ENCODE measurements at regions of chr5 and their contacts with region 1.

Region 1: GRCh38 chr5:139633295-139634027 is 14.7 kb upstream of the CXXC5 start:
- DNase-seq: peak; percentile 63
- ATAC-seq: peak; percentile 15
- H3K4me3 Mint-ChIP-seq: no peak overlapping the region
- H3K27ac Mint-ChIP-seq: peak overlapping the region; percentile 97
- H3K4me1 Mint-ChIP-seq: peaks cover 53% of the 10 kb centered on the region
- H3K27me3 Mint-ChIP-seq: no peaks in the 10 kb centered on the region
- CTCF ChIP-seq: peak; percentile 56

Region 2: DNA sequence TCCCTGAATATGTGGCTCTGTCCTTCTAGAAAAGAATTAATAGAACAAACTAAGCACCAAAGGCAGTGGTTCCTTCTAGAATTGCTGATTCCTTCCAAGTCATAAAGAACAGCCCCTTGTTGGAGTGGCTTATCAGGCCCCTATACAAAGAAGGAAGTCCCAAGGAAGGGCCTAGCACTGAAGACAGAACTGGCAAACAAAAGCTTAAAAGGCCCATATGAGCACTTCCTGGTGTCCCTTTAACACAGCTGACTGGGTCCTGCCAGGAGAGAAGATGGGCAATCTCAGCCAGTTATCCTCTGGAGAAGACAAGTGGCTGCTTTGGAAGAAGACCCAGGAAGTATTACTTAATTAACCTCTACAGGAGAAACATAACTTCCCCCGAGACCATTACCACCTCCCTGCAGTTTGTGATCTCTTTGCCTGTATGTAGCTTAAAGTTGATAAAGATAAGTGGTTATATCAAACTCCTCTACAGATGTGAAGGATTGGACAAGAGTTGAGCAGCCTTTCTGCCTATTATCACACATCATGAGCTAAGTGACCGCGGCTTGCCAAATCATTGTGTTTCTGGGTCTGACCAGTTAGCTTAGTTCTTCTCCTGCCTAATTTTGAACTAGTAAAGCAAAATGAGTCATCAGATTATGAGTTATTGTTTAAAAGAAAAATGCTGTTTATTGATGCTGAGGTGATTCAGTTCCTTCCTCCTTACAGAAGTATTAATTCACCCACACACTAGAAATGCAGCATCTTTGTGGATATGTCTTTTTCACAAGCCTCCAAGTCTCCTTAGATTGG is 137.6 kb before region 1 on chr5:
- CTCF ChIA-PET with region 1: no interaction called
- POLR2A ChIA-PET with region 1: no interaction called
- intact Hi-C with region 1: no loop called
- DNase-seq: no peak
- ATAC-seq: no peak
- H3K4me3 Mint-ChIP-seq: no peak overlapping the region
- H3K27ac Mint-ChIP-seq: no peak overlapping the region
- H3K4me1 Mint-ChIP-seq: no peaks in the 10 kb centered on the region
- H3K27me3 Mint-ChIP-seq: peaks cover 2% of the 10 kb centered on the region
- CTCF ChIP-seq: no peak

Region 3: GRCh38 chr5:139517683-139518564 is 115.5 kb before region 1 on chr5:
- CTCF ChIA-PET with region 1: interaction called, 7 read pairs
- POLR2A ChIA-PET with region 1: interaction called, 3 read pairs
- intact Hi-C with region 1: loop called (anchors 5 kb)
- DNase-seq: peak; percentile 93
- ATAC-seq: peak; percentile 93
- H3K4me3 Mint-ChIP-seq: peak overlapping the region; percentile 84
- H3K27ac Mint-ChIP-seq: peak overlapping the region; percentile 89
- H3K4me1 Mint-ChIP-seq: peaks cover 19% of the 10 kb centered on the region
- H3K27me3 Mint-ChIP-seq: no peaks in the 10 kb centered on the region
- CTCF ChIP-seq: peak; percentile 57

Region 4: DNA sequence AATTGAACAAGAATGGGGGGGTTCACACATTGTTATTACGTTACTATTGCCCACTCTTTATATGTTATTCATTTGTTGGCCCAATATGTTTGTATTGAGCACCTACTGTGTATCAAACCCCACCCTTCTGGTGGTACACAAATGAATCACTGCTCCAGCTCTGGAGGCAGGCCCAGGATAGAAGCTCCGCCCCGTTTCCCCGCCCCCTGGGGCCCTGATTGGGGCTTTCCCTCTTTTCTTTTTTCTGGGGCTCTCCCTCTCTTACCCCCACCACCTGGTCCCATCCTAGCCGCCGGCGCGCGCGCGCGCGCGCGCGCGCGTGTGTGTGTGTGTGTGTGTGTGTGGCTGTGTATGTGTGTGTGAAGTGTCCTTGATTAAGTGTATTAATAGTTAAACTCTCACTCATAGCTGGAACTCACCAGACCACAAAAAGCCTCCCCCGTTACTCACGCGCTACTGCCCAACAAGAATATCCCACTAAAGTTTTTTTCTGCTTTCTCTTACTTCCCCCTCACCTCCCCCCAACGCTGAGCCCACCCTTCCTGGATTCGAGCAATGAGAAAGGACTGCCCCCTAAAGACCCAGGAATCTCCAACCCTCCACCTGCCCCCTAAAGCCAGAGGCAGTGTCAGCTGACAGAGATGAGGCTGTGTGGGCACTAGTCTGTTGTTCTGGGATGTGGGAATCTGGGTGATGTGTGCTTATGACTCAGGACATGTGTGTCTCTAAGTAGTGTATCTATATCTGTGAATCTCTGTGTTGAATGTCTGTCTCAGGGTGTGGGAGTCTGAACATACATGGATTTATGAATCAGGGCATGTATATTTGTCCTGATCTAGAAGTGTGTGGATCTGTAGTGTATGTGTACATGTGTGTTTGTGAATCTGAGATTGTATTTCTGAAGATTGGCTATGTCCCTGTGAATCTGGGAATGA is 18.7 kb after region 1 on chr5:
- CTCF ChIA-PET with region 1: interaction called, 169 read pairs
- POLR2A ChIA-PET with region 1: interaction called, 772 read pairs
- intact Hi-C with region 1: loop called (anchors 1 kb)
- DNase-seq: peak; percentile 91
- ATAC-seq: peak; percentile 56
- H3K4me3 Mint-ChIP-seq: peak overlapping the region; percentile 98
- H3K27ac Mint-ChIP-seq: peak overlapping the region; percentile 85
- H3K4me1 Mint-ChIP-seq: peaks cover 76% of the 10 kb centered on the region
- H3K27me3 Mint-ChIP-seq: no peaks in the 10 kb centered on the region
- CTCF ChIP-seq: no peak

Region 5: DNA sequence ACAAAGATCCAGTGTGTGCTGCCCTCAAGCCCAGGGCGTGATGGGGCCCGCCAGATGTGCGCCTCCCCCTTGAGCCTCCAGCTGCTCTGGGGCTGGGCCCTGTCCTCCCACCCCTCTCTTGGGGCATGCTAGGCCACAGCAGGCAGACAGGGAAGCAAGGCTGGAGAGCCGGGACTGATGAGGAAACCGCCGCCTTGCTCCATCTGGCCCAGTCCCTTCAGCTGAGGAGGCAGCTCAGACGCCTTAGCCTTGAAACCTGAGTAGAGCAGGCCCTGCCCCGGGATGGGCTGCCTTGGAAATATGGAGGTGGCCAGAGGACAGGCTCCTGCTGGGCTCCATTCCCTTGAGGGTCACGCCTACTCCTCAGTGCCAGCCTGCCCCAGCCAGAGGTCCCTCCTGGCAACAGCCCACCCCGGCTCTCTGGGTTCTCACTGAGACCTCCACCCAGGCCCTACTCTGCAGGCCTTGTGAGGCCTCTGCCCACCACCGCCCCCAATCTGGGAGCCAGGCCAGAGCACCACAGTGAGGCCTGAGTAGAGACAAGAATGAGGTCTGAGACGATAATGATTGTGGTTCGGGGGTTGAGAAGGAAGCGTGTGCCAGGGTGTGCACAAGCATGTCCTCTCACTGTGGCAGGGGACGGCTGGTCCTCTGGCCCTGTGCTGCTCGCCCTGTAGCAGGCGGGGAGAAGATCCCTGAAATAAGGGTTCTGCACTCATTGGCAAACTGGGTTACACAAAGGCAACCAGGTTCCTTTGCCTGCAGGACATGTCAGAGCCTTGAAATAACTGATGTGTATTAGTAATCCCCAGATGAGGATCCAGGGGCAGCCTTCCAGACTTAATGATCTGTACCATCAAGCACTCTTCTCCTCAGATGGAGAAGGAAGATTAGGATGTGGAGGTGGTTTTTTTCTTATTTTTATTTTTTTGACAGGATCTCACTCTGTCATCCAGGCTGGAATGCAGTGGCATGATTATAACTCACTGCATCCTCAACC is 45.6 kb after region 1 on chr5:
- CTCF ChIA-PET with region 1: interaction called, 325 read pairs
- POLR2A ChIA-PET with region 1: interaction called, 6 read pairs
- intact Hi-C with region 1: no loop called
- DNase-seq: no peak
- ATAC-seq: no peak
- H3K4me3 Mint-ChIP-seq: no peak overlapping the region
- H3K27ac Mint-ChIP-seq: no peak overlapping the region
- H3K4me1 Mint-ChIP-seq: peaks cover 51% of the 10 kb centered on the region
- H3K27me3 Mint-ChIP-seq: no peaks in the 10 kb centered on the region
- CTCF ChIP-seq: no peak

Region 6: GRCh38 chr5:139711067-139711905 is 77.8 kb after region 1 on chr5:
- CTCF ChIA-PET with region 1: interaction called, 33 read pairs
- POLR2A ChIA-PET with region 1: interaction called, 56 read pairs
- intact Hi-C with region 1: loop called (anchors 1 kb)
- DNase-seq: no peak
- ATAC-seq: peak; percentile 45
- H3K4me3 Mint-ChIP-seq: peak overlapping the region; percentile 82
- H3K27ac Mint-ChIP-seq: peak overlapping the region; percentile 46
- H3K4me1 Mint-ChIP-seq: peaks cover 30% of the 10 kb centered on the region
- H3K27me3 Mint-ChIP-seq: no peaks in the 10 kb centered on the region
- CTCF ChIP-seq: no peak

Region 7: DNA sequence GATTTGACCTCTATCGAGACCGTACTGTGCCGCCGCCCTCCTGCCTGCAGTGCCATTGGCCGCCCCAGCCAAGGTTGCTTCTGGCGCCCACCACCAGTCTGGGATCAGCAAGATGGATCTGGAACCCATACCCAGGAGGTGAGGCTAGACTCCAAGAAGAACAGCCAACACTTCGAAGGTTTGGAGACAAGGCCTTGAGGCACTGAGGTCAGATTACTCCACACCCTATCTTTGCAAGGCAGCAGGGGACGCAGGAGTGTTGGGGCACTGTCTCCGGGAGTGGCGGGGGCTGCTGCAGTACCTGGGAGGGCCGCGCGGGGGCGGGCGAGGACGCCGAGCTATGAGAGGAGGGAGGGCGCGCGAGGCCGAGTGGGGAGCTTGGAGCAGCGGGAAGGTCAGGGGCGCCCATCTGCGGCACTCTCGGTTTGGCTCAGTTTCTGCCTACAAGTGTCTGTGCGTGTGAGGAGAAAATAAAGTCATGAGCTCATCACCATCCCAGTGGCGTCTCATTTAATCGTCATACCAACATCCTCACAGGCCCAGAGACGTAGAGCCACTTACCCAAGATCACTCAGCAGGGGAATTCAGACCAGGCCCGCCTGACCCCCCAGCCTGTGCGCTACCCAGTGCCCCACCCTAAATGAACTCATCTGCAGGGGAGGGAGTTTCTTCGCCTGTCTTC is 141.7 kb after region 1 on chr5:
- CTCF ChIA-PET with region 1: interaction called, 228 read pairs
- POLR2A ChIA-PET with region 1: no interaction called
- intact Hi-C with region 1: no loop called
- DNase-seq: peak; percentile 83
- ATAC-seq: peak; percentile 96
- H3K4me3 Mint-ChIP-seq: peak overlapping the region; percentile 59
- H3K27ac Mint-ChIP-seq: peak overlapping the region; percentile 46
- H3K4me1 Mint-ChIP-seq: peaks cover 12% of the 10 kb centered on the region
- H3K27me3 Mint-ChIP-seq: peaks cover 3% of the 10 kb centered on the region
- CTCF ChIP-seq: peak; percentile 84

Region 8: GRCh38 chr5:139863855-139864558 is 230.5 kb after region 1 on chr5:
- CTCF ChIA-PET with region 1: no interaction called
- POLR2A ChIA-PET with region 1: no interaction called
- intact Hi-C with region 1: loop called (anchors 1 kb)
- DNase-seq: peak; percentile 45
- ATAC-seq: peak; percentile 90
- H3K4me3 Mint-ChIP-seq: no peak overlapping the region
- H3K27ac Mint-ChIP-seq: no peak overlapping the region
- H3K4me1 Mint-ChIP-seq: peaks cover 5% of the 10 kb centered on the region
- H3K27me3 Mint-ChIP-seq: peaks cover 20% of the 10 kb centered on the region
- CTCF ChIP-seq: peak; percentile 64